GM12878 (cell line): ENCODE measurements at regions of chr11 and their contacts with region 1.

Region 1: DNA sequence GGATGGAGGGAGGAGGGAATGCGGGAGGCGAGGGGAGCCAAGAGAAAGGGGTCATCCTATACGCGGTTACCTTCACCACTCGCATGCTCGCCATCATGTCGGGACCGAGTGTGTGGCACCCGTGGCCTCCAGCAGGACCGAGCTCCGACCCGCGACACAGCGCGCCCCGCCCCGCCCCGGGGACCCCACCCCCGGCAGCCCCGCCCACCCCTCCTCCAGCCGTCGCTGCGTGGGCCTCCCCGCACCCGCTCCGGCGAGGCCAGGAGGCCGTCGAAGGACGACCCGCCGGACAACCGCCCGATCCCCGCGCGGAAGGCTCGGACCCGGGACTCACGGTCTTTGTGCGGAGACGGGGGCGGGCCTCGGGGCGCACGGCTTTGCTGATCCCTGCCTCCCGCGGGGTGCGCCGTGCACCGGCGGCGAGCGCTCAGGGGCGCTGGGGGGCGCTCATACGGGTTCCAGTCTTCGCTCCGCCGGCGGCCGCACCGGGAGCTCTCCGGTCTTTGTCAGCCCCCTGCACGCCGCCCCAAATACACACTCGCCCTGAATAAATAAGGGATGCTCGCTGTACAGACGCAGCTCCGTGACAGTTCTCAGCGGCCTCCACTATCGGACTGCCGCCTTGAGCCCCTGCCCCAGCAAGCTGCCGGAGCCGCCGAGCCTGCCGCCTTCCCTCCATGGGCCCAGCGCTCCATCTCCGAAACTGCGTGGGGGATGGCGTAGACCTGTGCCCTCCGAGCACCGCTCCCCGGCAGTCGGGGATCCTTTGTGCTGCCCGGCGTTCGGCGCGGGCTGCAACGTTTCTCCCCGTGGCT is at the start of gene UBE2L6:
- DNase-seq: no peak
- ATAC-seq: peak; percentile 84
- H3K4me3 ChIP-seq: peak within 1 kb of the TSS; percentile 100
- H3K27ac ChIP-seq: peak within 1 kb of the TSS; percentile 87
- H3K4me1 ChIP-seq: peaks cover 4% of the 10 kb centered on the region
- H3K27me3 ChIP-seq: no peaks in the 10 kb centered on the region
- CTCF ChIP-seq: peak in 2 of 3 experiments; percentile 43 to 66; a peak in 3 of 6 replicates
- EP300 ChIP-seq: no peak
- POLR2A ChIP-seq: peak; percentile 59
- RAD21 ChIP-seq: no peak
- polyA plus RNA-seq, gene UBE2L6: 262 to 295 TPM

Region 2: DNA sequence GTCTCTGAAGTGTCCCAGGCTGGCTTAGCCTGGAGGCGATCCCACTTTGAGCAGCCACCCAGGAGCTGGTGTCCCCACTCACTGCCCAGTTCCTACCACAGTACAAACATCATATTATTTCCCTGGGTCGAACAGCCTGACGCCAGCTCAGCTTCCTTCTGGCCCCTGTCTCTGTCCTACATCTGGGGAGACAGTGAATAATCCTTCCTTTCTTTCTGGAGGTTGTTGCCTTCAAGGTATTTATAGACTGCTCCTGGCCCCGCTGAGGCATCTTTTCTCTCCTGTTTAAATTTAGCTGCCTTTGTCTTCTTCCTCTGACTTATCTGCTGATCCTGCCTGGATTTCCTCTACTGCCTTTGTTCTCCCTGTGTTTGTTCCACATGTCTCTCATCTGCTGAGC is 442.8 kb before region 1 on chr11:
- CTCF ChIA-PET with region 1: no interaction called
- POLR2A ChIA-PET with region 1: no interaction called
- RAD21 ChIA-PET with region 1: no interaction called
- SMC1A ChIA-PET with region 1: no interaction called
- in situ Hi-C with region 1: no loop called
- intact Hi-C with region 1: no loop called
- DNase-seq: no peak
- ATAC-seq: no peak
- H3K4me3 ChIP-seq: no peak overlapping the region
- H3K27ac ChIP-seq: no peak overlapping the region
- H3K4me1 ChIP-seq: no peaks in the 10 kb centered on the region
- H3K27me3 ChIP-seq: peaks cover 1 to 2% of the 10 kb centered on the region in 2 experiments; a peak in 3 of 4 replicates
- CTCF ChIP-seq: no peak
- EP300 ChIP-seq: no peak
- POLR2A ChIP-seq: no peak
- RAD21 ChIP-seq: no peak

Region 3: GRCh38 chr11:57546869-57547475 is 20.8 kb before region 1 on chr11:
- CTCF ChIA-PET with region 1: interaction called, 18 read pairs
- POLR2A ChIA-PET with region 1: interaction called, 6 read pairs
- RAD21 ChIA-PET with region 1: interaction called, 7 read pairs
- SMC1A ChIA-PET with region 1: interaction called, 9 read pairs
- in situ Hi-C with region 1: no loop called
- intact Hi-C with region 1: loop called (anchors 1 kb)
- DNase-seq: no peak
- ATAC-seq: peak; percentile 82
- H3K4me3 ChIP-seq: no peak overlapping the region
- H3K27ac ChIP-seq: peak overlapping the region; percentile 48
- H3K4me1 ChIP-seq: peaks cover 15% of the 10 kb centered on the region
- H3K27me3 ChIP-seq: no peaks in the 10 kb centered on the region
- CTCF ChIP-seq: no peak
- EP300 ChIP-seq: 0 out of 4 replicates have a peak, but pooled peaks of 1 of the 2 experiments have one; percentile 15
- POLR2A ChIP-seq: no peak
- RAD21 ChIP-seq: no peak

Region 4: GRCh38 chr11:57712256-57713150 is 144.8 kb after region 1 on chr11 and contains the start of gene TMX2:
- CTCF ChIA-PET with region 1: interaction called, 5 read pairs
- POLR2A ChIA-PET with region 1: no interaction called
- RAD21 ChIA-PET with region 1: interaction called, 3 read pairs
- SMC1A ChIA-PET with region 1: no interaction called
- in situ Hi-C with region 1: no loop called
- intact Hi-C with region 1: loop called (anchors 5 kb)
- DNase-seq: peak; percentile 99
- ATAC-seq: peak; percentile 95
- H3K4me3 ChIP-seq: peak within 1 kb of the TSS; percentile 97
- H3K27ac ChIP-seq: peak within 1 kb of the TSS; percentile 86
- H3K4me1 ChIP-seq: peaks cover 4% of the 10 kb centered on the region
- H3K27me3 ChIP-seq: no peaks in the 10 kb centered on the region
- CTCF ChIP-seq: no peak
- EP300 ChIP-seq: no peak
- POLR2A ChIP-seq: peak; percentile 96
- RAD21 ChIP-seq: no peak
- polyA plus RNA-seq, gene TMX2: 107 to 128 TPM

Region 5: DNA sequence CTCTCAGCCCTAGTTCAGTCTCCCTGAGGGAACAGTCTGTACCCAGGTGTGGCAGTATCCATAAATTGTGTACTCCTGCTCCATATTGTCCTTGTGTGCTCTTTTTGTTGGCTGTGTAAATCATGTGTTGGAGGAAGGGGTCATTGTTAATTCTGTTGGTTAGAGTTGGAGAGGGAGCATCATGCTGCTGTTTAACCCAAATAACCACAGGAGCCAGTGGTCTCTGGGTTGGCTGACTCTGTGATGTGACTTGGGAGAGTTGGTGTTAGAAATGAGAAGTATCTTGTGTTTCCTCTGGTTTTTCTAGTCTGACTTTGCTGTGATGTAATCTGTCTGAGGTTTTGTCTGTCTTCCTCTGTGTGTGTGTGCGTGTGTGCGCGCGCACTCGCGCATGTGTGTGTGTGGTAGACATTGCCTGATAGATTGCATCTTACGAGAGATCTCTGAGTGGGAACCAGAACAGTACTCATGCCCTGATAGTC is 224.4 kb after region 1 on chr11:
- CTCF ChIA-PET with region 1: no interaction called
- POLR2A ChIA-PET with region 1: interaction called, 3 read pairs
- RAD21 ChIA-PET with region 1: interaction called, 4 read pairs
- SMC1A ChIA-PET with region 1: no interaction called
- in situ Hi-C with region 1: no loop called
- intact Hi-C with region 1: loop called (anchors 10 kb)
- DNase-seq: peak; percentile 93
- ATAC-seq: peak; percentile 92
- H3K4me3 ChIP-seq: peak overlapping the region; percentile 34; the same call in 1 of the 2 replicates
- H3K27ac ChIP-seq: peak overlapping the region; percentile 52
- H3K4me1 ChIP-seq: peaks cover 42% of the 10 kb centered on the region
- H3K27me3 ChIP-seq: no peaks in the 10 kb centered on the region
- CTCF ChIP-seq: no peak
- EP300 ChIP-seq: peak; percentile 49 to 81; a peak in 3 of 4 replicates
- POLR2A ChIP-seq: peak; percentile 62; the same call in 1 of the 2 replicates
- RAD21 ChIP-seq: no peak